BJ (cell line): ENCODE measurements at regions of chr5 and their contacts with region 1.

Region 1: GRCh38 chr5:154077696-154078095 is 38.9 kb downstream of the MFAP3 start:
- DNase-seq: no peak
- H3K4me3 ChIP-seq: no peak overlapping the region
- H3K27me3 ChIP-seq: no peaks in the 10 kb centered on the region
- CTCF ChIP-seq: no peak

Region 2: GRCh38 chr5:154179846-154180710 is 102.4 kb after region 1 on chr5:
- CTCF ChIA-PET with region 1: interaction called, 48 read pairs
- POLR2A ChIA-PET with region 1: no interaction called
- DNase-seq: no peak
- H3K4me3 ChIP-seq: no peak overlapping the region
- H3K27me3 ChIP-seq: 0 out of 2 replicates have a peak, but pooled peaks cover under 1% of the 10 kb centered on the region
- CTCF ChIP-seq: peak; percentile 87